PC-3 (cell line): ENCODE measurements at regions of chr17 and their contacts with region 1.

Region 1: DNA sequence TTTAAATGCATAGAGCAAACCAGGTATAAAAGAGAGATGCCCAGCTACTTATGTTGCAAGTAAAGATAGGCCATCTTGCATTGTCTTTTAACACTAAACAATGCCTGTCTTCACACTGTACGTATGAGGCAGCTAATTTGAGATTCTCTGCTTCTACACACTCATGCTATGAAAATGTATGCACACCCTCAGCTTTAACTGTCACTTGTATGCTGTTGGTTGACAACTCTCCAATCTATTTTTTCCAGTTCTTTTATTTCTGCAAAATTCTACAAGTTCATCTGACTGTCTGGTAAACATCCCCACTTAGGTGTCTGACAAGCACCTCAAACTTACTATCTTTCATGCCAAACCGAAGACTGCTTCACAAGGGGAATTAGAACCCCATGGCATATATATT is 131.7 kb upstream of the SOX9 start:
- DNase-seq: no peak
- ATAC-seq: no peak
- H3K4me3 ChIP-seq: no peak overlapping the region
- H3K27ac ChIP-seq: peak overlapping the region; percentile 98; the same call in 1 of the 2 replicates
- H3K4me1 ChIP-seq: peaks cover 49% of the 10 kb centered on the region
- H3K27me3 ChIP-seq: no peaks in the 10 kb centered on the region
- CTCF ChIP-seq: no peak

Region 2: DNA sequence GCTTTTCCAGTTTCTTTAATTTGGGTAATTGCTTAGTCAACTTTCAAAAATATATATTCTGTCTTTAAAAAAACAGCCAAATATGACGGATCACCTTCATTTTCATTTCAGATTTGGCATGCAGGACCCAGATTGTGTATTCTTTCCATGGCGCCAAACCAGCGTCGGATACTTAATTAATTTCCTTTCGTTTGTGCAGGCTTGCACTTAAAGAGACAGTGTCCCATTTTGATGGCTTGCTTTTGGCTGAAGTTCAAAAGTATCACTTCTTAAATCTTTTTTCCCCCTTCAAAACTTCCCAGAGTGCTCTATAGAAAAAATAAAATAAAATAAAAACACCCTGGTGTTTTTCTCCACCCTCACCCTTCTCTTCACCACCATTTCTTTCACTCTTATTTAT is 262.8 kb before region 1 on chr17:
- CTCF ChIA-PET with region 1: no interaction called
- POLR2A ChIA-PET with region 1: interaction called, 13 read pairs
- intact Hi-C with region 1: no loop called
- DNase-seq: no peak
- ATAC-seq: no peak
- H3K4me3 ChIP-seq: no peak overlapping the region
- H3K27ac ChIP-seq: no peak overlapping the region
- H3K4me1 ChIP-seq: no peaks in the 10 kb centered on the region
- H3K27me3 ChIP-seq: no peaks in the 10 kb centered on the region
- CTCF ChIP-seq: no peak